ENCODE measurements at regions of chr22 and their contacts with region 1.

Region 1: DNA sequence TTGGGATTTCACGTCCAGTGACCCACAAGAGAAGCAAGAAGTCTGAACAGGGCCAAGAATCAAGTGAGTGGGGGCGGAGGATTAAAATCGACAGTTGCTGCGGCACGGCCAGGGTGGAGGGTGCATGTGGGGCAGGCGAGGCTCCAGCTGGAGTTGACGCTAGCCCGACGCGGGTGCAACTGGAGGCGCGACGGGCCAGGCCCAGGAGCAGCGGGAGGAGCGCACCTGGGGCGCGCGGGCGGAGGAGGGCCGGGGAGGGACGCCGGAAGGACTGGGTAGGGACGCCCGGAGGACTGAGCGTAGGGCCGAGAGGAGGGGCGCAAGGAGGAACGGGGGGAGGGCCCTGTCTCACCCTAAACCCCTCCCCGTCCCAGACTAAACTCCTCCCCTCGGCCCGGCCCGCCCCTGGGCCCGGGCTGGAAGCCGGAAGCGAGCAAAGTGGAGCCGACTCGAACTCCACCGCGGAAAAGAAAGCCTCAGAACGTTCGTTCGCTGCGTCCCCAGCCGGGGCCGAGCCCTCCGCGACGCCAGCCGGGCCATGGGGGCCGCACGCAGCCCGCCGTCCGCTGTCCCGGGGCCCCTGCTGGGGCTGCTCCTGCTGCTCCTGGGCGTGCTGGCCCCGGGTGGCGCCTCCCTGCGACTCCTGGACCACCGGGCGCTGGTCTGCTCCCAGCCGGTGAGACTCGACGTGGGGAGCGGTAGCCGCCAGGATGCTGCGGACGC is at the start of gene IL17RA:
- DNase-seq: peak; percentile 94
- ATAC-seq: peak; percentile 98
- total RNA-seq, gene IL17RA: 7.5 TPM

Region 2: DNA sequence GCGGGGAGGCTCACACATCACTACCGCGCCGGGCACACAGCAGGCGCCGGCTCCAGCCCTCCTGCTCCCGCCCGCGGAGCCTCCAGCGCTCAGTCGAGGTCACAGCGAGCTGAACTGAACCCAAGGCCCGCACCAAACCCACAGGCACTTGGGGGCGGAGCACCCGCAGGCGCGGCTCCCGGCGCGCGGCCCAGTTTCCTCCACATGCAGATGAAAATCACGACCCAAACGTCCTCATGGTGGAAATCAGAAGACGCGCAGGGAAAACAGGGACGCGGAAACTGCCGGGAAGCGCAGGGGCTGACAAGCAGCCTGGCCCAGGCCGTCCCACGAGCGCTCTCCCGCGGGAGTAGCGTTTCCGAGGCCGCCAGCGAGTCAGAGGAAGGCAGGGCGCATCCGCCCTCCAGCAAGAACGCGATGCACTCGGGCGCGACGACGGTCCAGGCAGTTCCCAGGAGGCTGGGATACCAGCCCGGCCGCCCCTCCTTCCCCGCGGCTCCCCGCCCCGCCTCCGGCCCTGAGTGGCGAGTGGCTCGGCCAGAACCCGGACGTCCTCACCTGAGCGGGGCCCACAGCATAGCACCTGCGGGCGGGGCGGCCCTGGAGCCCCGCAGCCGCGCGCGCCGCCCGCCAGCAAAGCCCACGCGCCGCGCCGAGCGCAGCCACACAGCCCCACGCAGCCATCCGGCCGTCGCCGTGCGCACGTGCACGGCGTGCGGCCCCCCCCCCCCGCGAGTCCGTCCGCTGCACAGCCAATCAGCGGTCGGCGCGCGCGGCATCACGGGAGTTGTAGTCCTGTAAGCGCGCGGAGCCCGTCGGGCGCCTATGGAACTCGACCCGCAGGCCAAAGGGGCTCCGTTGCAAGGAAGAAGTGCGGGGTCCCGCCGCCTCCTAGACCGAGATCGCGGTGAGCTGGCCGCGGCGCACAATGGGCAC is 74.1 kb after region 1 on chr22 and contains the start of gene HDHD5:
- intact Hi-C with region 1: loop called (anchors 10 kb)
- DNase-seq: peak; percentile 96
- ATAC-seq: peak; percentile 92
- total RNA-seq, gene HDHD5: 59.8 TPM

Region 3: DNA sequence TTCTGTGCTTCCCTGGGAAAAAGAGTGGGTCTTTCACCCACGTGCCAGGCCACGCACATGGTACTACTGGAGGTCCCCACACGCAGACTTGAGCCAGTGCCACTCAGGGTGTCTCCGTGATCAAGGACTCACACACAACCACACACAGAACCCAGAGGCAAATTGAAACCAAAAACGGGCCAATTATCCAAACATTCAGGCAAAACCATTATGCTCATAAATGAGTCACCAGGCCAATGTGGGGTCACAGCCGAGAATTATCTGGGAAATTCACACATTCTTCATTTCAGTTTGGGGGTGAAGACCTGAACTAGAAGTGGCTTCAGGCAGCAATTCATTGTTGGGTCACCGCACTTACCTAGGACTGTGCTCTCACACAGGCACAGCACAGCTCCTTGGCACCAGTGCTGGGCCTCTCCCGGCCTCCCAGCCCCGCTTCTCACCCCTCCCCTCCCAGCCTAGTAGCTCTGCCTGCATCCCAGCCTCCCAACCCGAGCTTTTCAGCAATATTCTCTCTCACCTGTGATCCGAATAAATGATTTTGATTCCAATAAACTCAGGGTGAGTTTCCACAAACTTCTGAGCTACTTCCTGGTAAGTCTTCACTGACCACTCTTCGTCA is 106.6 kb after region 1 on chr22:
- intact Hi-C with region 1: no loop called
- DNase-seq: no peak
- ATAC-seq: no peak